OCI-LY7 (cell line): ENCODE measurements at regions of chr5 and their contacts with region 1.

Region 1: GRCh38 chr5:167723254-167723871 is 568.1 kb upstream of the WWC1 start:
- DNase-seq: peak; percentile 68
- H3K4me3 ChIP-seq: no peak overlapping the region
- H3K27ac ChIP-seq: no peak overlapping the region
- H3K4me1 ChIP-seq: no peaks in the 10 kb centered on the region
- CTCF ChIP-seq: peak; percentile 87

Region 2: GRCh38 chr5:168047043-168047668 is 323.8 kb after region 1 on chr5:
- CTCF ChIA-PET with region 1: no interaction called
- POLR2A ChIA-PET with region 1: no interaction called
- intact Hi-C with region 1: loop called (anchors 5 kb)
- DNase-seq: peak; percentile 16
- H3K4me3 ChIP-seq: no peak overlapping the region
- H3K27ac ChIP-seq: no peak overlapping the region
- H3K4me1 ChIP-seq: no peaks in the 10 kb centered on the region
- CTCF ChIP-seq: peak; percentile 64

Region 3: DNA sequence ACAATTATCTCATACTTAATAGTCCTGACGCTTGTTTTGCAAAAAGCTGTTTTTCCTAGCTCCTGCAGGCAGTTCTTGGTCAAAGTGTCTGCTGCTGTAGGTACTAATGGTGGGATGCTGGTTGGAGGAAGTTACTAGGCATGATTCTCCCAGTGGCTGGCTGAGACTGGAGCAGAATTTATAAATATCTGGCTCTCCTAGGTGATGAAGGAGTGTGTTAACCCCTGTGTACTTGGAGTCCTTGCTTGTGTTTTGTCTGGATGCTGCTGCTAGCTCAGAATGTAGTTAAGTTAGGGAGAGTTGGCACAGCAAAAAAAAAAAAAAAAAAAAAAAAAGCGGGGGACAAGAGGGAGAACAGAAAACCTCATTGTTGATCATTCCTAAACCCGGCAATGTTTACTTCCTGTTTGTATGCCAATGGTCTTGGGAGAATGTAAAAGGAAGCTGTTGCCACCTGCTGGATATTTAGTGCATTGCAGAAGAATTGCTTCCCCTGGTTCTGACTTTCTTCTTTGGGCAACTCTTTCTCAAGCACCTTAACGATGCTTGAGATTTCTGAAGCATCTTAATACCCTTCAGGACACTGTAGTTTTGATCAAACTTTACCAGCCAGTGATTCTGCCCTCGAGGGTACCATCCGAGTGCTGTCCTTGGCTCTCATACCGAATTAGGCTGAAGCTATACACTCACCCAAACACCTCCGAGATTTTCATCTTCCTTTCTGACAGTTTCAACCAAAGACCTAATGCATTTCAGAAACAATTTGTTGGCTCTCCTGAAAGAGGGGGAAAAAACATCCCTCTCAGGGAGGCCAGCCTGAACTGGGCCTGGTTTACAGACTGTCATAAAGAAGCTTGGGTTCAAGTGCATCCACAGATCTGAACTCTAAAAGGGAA is 496.4 kb after region 1 on chr5:
- CTCF ChIA-PET with region 1: interaction called, 4 read pairs
- POLR2A ChIA-PET with region 1: no interaction called
- intact Hi-C with region 1: loop called (anchors 1 kb)
- DNase-seq: peak; percentile 65
- H3K4me3 ChIP-seq: peak overlapping the region; percentile 36
- H3K27ac ChIP-seq: no peak overlapping the region
- H3K4me1 ChIP-seq: no peaks in the 10 kb centered on the region
- CTCF ChIP-seq: peak; percentile 82